Endothelial cell of umbilical vein (primary cell): ENCODE measurements at regions of chr1 and their contacts with region 1.

Region 1: GRCh38 chr1:2233997-2234761 is 6.1 kb downstream of the SKI start:
- DNase-seq: peak; percentile 47
- H3K4me3 ChIP-seq: peak overlapping the region in 2 of 3 experiments; percentile 0 to 10
- H3K27ac ChIP-seq: peak overlapping the region; percentile 46
- H3K4me1 ChIP-seq: peaks cover 40% of the 10 kb centered on the region
- H3K27me3 ChIP-seq: no peaks in the 10 kb centered on the region
- CTCF ChIP-seq: peak in 1 of 2 donors; percentile 9
- POLR2A ChIP-seq: no peak

Region 2: DNA sequence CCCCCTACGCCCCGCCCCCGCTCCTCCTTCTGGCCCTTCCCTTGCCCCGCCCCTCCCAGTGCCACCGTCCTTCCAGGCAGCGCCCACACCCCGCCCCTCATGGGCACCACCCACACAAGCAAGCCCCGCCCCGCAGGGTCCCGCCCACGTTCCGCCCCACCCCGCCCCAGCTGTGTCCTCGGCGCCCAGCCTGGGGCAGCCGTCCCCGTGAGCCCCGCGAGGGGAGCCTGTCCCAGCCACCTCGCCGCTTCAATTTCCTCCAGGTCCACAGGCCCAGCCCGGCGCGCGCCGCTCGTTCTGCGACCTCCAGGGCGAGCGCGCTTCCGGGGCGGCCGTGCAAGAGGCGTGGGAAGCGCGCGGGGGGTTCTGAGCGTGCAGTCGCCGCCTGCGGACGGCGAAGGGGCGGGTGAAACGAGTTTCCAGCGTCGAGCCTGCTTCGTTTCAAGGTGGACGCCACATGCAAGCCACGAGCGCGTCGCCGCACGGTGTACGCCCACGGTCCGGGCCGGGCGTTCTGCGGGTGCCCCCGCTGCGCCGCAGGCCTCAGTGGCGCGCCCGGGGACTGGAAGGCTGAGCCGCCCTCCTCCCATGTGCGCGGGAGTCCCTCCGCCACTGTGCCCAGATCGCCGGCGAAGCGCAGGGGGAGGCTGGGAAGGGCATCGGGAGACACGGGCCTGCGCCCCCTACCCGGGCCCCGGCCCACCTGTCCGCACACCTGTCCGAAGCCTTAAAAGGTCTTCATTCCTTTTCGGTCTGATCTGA is 28.8 kb before region 1 on chr1:
- CTCF ChIA-PET with region 1: interaction called, 6 read pairs
- POLR2A ChIA-PET with region 1: interaction called, 3 read pairs
- dilution Hi-C with region 1: no loop called
- intact Hi-C with region 1: loop called (anchors 2 kb)
- DNase-seq: peak; percentile 86
- H3K4me3 ChIP-seq: peak overlapping the region in 2 of 3 experiments; percentile 26 to 45
- H3K27ac ChIP-seq: peak overlapping the region; percentile 24
- H3K4me1 ChIP-seq: peaks cover 29% of the 10 kb centered on the region
- H3K27me3 ChIP-seq: no peaks in the 10 kb centered on the region
- CTCF ChIP-seq: no peak
- POLR2A ChIP-seq: no peak

Region 3: GRCh38 chr1:2290595-2291510 is 56.7 kb after region 1 on chr1:
- CTCF ChIA-PET with region 1: interaction called, 4 read pairs
- POLR2A ChIA-PET with region 1: interaction called, 3 read pairs
- dilution Hi-C with region 1: no loop called
- intact Hi-C with region 1: loop called (anchors 1 kb)
- DNase-seq: peak; percentile 94
- H3K4me3 ChIP-seq: peak overlapping the region in 1 of 3 experiments; percentile 39
- H3K27ac ChIP-seq: peak overlapping the region; percentile 87
- H3K4me1 ChIP-seq: peaks cover 29% of the 10 kb centered on the region
- H3K27me3 ChIP-seq: no peaks in the 10 kb centered on the region
- CTCF ChIP-seq: no peak
- POLR2A ChIP-seq: peak; percentile 22

Region 4: DNA sequence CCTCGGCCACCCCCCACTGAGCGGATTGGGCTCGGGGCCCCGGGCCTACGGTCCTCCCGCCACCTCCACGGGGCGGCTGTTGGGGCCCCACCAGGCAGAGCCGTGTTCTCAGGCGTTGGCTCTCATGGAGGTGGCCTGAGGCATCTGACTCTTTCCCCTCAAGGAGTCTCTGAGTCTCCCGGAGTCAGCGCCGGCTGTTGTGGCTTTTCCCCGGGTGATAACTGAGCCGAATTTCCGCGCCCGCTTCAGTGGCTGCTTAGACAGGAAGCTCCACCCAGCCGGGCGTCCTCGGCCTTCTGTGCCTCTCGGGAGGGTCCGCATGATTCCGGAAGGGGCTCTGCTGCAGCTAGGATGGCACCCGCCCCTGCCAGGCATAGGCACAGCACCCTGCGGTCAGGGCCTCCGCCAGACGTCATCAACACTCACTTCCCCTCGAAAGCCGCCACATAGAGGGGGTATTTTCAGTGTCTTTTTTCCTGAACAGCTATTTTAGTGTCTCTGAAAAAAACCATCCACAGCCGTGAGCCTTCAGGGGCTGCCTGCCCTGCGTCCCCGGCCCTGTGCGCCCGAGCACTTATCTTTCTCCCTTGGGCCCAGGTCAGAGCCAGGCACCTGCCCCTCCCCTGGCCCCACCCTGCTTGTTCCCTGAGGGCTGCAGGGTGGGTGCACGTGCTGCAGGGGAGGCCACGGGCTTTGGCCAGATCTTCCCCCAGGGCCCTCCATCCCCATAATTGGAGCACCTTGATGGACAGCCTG is 66.8 kb after region 1 on chr1:
- CTCF ChIA-PET with region 1: interaction called, 3 read pairs
- POLR2A ChIA-PET with region 1: interaction called, 5 read pairs
- dilution Hi-C with region 1: no loop called
- intact Hi-C with region 1: loop called (anchors 2 kb)
- DNase-seq: peak; percentile 62
- H3K4me3 ChIP-seq: no peak overlapping the region
- H3K27ac ChIP-seq: peak overlapping the region; percentile 83
- H3K4me1 ChIP-seq: peaks cover 27% of the 10 kb centered on the region
- H3K27me3 ChIP-seq: no peaks in the 10 kb centered on the region
- CTCF ChIP-seq: no peak
- POLR2A ChIP-seq: peak; percentile 21

Region 5: DNA sequence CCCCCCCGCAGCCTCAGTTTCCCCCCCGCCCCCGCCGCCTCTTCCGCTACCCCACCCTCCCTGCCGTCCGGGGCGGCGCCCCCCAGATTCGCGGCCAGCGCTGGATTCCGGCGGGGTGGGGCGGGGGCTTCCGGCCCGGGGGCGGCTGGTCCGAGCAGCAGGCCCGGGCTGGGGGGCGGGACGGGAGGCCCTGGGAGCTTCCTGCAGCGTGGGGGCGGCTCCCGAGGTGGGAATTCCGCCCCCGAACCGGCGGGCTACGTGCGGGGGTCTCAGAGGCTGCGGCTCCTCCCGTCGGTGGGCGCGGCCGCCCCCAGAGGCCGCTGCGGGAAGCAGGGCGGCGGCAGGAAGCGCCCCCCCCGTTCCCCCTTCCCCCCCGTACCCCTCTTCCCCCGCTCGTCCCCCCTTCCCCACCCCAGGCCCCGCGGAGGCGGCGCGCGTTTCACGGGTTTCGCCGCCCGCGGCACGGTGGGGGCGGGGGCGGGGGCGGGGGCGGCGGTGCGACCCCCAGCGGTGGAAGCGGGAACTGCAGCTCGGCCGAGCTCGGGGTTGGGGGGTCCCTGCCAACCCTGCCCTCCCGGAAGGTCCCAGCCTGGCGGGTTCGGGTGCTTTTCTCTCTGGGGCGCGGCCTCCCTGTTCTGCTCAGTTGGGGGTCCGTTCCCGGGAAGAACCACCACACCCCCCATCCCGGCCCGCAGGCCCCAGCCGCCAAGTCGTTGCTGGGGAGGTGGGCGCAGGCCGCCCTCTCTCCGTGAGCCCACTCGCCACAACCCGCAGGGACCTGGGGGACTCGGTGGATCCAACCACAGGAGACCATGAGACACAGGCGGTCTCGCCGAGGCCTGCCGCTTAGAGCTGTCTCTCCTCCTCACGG is 80.9 kb after region 1 on chr1:
- CTCF ChIA-PET with region 1: interaction called, 51 read pairs
- POLR2A ChIA-PET with region 1: interaction called, 5 read pairs
- dilution Hi-C with region 1: no loop called
- intact Hi-C with region 1: loop called (anchors 1 kb)
- DNase-seq: peak; percentile 29
- H3K4me3 ChIP-seq: peak overlapping the region in 1 of 3 experiments; percentile 54
- H3K27ac ChIP-seq: no peak overlapping the region
- H3K4me1 ChIP-seq: peaks cover 7% of the 10 kb centered on the region
- H3K27me3 ChIP-seq: no peaks in the 10 kb centered on the region
- CTCF ChIP-seq: peak; percentile 44 to 72
- POLR2A ChIP-seq: no peak